ENCODE measurements at regions of chr11 and their contacts with region 1.

Region 1: DNA sequence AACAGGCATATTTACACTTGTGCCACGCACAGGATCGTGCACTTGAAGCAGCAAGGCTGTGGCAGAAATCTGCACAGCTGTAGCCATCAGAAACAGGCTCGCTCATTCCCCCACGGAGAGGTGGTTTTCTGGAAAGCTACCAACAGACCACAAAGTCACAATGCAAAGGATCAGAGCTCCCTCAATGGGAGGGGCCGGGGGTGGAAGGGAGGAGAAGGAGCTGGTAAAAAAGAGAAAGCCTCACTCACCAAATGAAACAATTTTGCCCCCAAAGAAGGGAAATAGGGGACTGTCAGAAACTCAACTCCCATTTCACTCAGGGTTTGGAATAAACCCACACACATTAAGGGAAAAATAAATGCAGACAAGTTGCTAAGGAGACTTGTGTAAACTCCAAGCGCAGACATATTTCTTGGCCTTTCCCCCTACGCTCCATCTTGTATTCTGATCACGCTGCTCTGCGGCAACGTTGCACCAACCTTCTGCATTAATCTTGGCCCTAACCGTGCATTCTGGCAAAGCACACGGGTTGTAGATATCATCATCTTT is 43.2 kb upstream of the BLID start:
- DNase-seq: peak; percentile 42 to 56
- H3K4me3 ChIP-seq: peak overlapping the region; percentile 16 to 26
- H3K27ac ChIP-seq: peak overlapping the region; percentile 87 to 93
- H3K4me1 ChIP-seq: peaks cover 0 to 6% of the 10 kb centered on the region in 2 donors
- H3K27me3 ChIP-seq: no peaks in the 10 kb centered on the region
- CTCF ChIP-seq: no peak
- POLR2A ChIP-seq: no peak

Region 2: DNA sequence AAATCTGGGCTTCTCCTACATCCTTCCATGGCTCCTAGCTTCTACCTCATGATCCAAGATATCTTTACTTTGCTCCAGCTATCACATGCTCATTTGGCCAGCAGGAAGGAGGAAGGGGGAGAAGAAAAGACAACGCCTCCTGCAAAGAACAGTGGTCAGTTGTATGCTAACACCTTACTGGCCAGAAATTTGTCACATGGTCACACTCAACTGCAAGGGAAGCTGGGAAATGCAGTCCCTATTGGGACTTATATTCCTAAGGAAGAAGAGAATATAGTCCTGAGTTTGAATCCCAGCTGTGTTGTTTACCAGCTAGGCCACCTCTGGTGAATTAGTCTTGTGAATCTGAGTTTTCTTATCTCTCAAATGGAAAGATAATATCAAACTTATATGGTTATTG is 315.2 kb before region 1 on chr11:
- intact Hi-C with region 1: no loop called
- DNase-seq: no peak
- H3K4me3 ChIP-seq: no peak overlapping the region
- H3K27ac ChIP-seq: no peak overlapping the region
- H3K4me1 ChIP-seq: no peaks in the 10 kb centered on the region
- H3K27me3 ChIP-seq: no peaks in the 10 kb centered on the region
- CTCF ChIP-seq: no peak
- POLR2A ChIP-seq: no peak

Region 3: DNA sequence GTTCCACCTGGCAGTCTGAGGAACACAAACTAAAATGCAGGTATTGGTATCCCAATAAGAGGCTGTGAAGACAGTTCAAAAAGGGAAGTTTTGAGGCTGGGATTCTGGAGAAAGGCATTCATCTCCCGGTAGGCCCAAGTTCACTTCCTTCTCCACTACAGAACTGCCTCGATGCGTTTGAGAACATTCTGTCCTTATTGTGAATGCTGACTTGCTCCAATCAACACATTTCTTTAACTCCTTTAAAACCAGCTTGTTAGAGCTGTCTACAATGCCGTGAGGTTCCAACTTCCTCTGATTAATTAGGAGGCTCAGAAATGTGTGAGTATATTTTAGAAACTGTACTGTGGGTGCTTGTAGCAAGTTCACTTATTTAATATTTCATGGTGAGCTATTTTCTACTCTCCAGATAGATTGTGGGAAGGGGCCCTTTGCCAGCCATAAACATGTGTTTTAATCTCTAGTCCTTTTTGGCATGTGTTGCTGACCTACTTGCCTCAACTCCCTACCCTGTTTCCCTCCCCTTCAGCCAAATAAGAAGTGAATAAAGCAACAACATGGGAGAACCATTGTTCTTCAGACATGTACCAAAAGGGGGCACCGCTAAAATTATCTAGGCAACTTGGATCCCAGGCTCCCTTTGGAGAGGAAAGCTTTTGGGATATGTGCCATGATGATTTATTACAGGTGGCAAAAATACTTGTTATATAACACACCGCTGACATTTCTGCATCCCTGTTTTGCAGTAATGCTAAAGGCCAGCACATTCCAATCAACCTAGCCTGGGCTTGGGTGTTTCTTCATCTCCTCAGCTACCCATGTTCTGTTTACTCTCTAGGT is 288.8 kb before region 1 on chr11:
- intact Hi-C with region 1: no loop called
- DNase-seq: no peak
- H3K4me3 ChIP-seq: no peak overlapping the region
- H3K27ac ChIP-seq: peak overlapping the region; percentile 39 to 48
- H3K4me1 ChIP-seq: no peaks in the 10 kb centered on the region
- H3K27me3 ChIP-seq: no peaks in the 10 kb centered on the region
- CTCF ChIP-seq: no peak
- POLR2A ChIP-seq: no peak

Region 4: DNA sequence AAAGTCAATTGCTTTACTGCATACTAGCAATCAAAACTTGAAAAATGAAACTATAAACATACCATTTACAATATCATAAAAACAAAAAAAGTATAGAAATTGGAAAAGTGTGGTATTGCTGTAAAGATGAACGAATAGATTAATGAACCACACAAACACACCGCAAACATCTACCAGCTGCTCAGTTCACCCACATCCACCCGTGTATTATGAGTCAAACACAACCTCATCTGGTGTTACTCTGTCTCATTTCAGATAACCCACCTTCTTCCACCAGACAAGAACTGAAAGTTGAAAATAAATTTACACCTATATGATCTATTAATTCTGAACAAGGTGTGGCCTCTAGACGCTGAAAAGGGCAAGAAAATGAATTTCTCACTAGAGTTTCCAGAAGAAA is 96.5 kb before region 1 on chr11:
- intact Hi-C with region 1: no loop called
- DNase-seq: no peak
- H3K4me3 ChIP-seq: no peak overlapping the region
- H3K27ac ChIP-seq: no peak overlapping the region
- H3K4me1 ChIP-seq: no peaks in the 10 kb centered on the region
- H3K27me3 ChIP-seq: no peaks in the 10 kb centered on the region
- CTCF ChIP-seq: no peak
- POLR2A ChIP-seq: no peak

Region 5: DNA sequence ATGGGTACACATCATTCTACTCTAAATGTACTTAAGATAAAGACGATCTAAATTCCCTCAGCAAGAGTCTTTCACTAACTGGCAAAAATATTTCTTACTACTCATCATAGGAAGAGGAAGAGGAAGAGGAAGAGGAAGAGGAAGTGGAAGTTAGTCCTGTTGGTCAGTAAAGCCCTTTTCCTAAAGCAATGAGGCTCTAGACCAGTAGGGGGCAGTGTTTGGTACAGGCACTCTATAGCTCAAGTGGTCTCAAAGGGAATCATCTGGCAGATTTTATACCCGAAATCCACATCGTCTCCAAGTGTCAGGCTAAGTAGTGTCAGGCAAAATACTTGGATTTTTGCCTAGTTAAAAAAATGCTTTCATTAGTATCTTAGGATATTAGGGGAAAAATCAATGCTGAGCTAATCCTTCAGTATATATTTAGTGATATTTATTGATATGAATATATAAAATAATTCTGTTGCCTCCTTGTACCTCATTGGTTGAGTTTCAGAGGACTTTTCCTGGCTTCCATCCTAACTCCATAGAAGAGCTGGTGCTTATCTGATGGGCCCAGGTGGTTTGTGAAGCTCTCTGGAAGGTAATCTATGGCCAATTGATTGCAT is 51.0 kb before region 1 on chr11:
- intact Hi-C with region 1: loop called (anchors 10 kb)
- DNase-seq: peak in 1 of 2 donors; percentile 36
- H3K4me3 ChIP-seq: no peak overlapping the region
- H3K27ac ChIP-seq: no peak overlapping the region
- H3K4me1 ChIP-seq: no peaks in the 10 kb centered on the region
- H3K27me3 ChIP-seq: no peaks in the 10 kb centered on the region
- CTCF ChIP-seq: peak; percentile 20 to 44 (median 33)
- POLR2A ChIP-seq: no peak